CD4-positive, alpha-beta T cell (primary cell): ENCODE measurements at regions of chr14 and their contacts with region 1.

Region 1: DNA sequence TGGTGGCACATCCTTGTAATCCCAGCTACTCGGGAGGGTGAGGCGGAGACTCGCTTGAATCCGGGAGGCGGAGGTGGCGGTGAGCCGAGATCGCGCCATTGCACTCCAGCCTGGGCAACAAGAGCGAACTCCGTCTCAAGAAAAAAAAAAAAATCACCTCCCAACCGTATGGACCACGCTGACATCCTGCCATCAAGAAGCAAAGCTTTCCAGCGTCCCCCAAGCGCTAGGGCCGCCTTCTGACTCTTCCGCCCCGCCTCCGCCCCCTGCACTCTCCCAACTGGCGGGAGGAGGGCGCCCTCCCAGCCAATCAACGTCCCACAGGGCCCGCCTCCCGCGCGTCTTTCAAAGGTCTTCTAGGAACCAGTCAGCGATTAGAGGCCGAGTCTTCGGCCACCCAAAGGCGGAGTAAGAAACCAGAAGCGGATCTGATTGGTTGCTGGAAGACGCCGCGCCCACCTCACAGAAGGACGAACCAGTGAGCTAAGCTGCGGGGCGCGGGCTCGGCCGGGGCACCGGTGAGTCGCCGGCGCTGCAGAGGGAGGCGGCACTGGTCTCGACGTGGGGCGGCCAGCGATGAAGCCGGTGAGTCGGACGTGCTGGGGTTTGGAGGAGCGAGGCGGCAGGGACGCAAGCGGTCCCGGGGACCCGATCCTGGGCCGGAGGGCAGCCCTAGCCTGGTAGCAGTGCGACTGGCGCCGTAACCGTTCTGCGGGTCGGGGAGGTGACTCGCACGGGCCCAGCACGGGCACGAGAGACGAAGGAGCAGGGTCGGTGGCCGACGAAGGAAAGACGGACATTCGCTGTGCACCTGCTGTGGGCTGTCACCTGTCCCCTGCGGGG is at the start of gene CDKN3:
- DNase-seq: peak; percentile 92 to 99 (median 96)
- ATAC-seq: peak; percentile 95
- H3K4me3 ChIP-seq: peak within 1 kb of the TSS; percentile 88
- H3K4me3 Mint-ChIP-seq: peak within 1 kb of the TSS; percentile 87
- H3K27ac ChIP-seq: no peak within 1 kb of the TSS
- H3K27ac Mint-ChIP-seq: peak within 1 kb of the TSS; percentile 47
- H3K4me1 ChIP-seq: peaks cover 20% of the 10 kb centered on the region
- H3K4me1 Mint-ChIP-seq: peaks cover 17% of the 10 kb centered on the region
- H3K27me3 ChIP-seq: no peaks in the 10 kb centered on the region
- H3K27me3 Mint-ChIP-seq: no peaks in the 10 kb centered on the region
- CTCF ChIP-seq: no peak
- total RNA-seq, gene CDKN3: 0.61 to 1.4 TPM

Region 2: DNA sequence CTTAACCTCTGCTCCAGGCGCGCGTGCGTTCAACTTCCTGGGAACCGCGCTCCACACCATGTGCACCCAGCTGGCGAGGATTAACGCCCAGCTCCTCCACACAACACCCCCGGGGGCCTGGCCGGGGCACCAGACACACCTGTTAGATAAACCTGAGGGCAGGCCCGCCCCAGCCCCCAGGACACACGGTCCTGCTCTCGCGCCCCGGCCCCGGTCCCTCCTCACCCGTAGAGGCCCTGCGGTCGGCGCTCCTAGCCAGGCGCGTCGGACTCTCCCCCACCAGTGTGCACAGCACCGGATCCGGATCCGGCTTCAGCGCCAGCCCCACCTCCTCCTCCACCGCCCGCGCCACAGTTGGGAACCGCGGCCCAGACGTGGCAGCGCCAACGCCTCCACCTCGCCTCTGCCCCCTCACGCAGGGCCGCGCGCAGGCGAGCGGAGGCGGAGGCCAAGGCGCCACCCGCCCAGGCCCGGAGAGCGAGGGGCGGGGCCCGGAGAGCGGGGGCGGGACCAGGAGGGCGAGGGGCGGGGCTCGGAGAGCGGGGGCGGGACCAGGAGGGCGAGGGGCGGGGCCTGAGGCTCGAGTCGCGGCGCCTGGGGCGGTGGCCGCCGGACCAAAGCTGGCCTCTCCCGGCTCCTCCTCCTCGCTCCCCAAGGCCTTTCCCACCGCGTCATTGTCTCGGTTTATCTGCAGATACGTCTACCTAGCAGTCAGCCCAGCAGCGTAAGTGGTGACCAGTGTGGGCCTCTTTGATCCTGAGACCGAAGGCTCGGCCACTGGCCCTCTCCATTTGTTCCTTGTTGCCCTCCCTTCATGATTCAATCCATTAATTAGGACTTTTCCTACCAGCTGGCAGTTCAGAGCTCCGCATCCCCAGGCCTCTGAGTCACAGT is 1605.3 kb before region 1 on chr14 and contains the start of gene GNPNAT1:
- CTCF ChIA-PET with region 1: no interaction called
- POLR2A ChIA-PET with region 1: no interaction called
- intact Hi-C with region 1: loop called in 1 of 2 experiments (anchors 2 kb)
- DNase-seq: peak; percentile 79 to 97 (median 87)
- ATAC-seq: peak; percentile 97
- H3K4me3 ChIP-seq: peak within 1 kb of the TSS; percentile 95
- H3K4me3 Mint-ChIP-seq: peak within 1 kb of the TSS; percentile 94
- H3K27ac ChIP-seq: peak within 1 kb of the TSS; percentile 64 to 78
- H3K27ac Mint-ChIP-seq: peak within 1 kb of the TSS; percentile 92
- H3K4me1 ChIP-seq: peaks cover 21% of the 10 kb centered on the region
- H3K4me1 Mint-ChIP-seq: peaks cover 51% of the 10 kb centered on the region
- H3K27me3 ChIP-seq: no peaks in the 10 kb centered on the region
- H3K27me3 Mint-ChIP-seq: no peaks in the 10 kb centered on the region
- CTCF ChIP-seq: no peak
- total RNA-seq, gene GNPNAT1: 3.8 to 4.6 TPM

Region 3: DNA sequence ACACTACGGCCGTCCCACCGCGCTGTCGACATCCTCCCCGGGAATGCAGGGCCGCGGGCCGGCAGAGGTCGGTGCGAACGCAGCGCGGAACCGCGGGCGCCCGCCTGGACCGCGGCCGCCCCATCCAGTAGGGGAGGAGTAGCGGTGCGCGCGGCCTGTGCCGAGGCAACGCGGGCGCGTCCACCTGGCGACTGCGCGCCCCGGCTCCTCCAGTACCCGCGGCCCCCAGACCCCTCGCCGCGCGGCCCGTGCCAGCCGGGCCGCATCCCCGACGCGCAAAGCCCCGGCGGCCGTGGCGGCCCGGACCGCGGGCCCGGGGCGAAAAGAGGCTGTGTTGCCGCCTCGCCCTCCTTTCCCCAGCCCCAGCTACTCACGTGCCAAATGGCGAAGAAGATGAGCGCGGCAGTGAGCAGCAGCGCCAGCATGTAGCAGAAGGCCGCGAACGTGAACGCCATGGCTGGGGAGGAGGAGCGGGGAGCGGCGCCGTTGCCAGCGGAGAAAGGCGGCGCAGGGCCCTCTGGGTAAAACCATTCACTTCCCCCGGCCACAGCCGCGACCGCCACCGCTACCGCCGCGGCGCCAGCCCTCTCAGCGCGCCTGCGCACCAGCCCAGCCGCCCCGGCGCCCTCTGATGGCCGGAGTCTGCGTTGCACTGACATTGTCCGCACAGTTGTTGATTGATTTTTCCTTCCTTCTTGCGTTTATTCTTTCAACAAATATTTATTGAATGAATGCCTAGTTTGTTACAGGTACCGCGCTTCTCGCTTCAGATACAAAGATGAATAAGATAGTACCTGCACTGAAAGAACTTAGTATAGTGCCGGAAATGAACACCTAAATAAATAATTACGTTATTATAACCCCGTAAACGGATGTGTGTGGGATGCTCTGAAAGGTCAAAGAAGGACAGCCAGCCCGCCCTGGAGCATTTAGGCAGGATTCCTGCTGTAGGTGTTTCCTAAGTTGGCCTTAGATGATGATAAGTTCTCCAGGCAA is 44.5 kb after region 1 on chr14 and contains the start of gene CNIH1:
- CTCF ChIA-PET with region 1: interaction called, 4 read pairs
- POLR2A ChIA-PET with region 1: interaction called, 6 read pairs
- intact Hi-C with region 1: loop called (anchors 1 kb)
- DNase-seq: peak; percentile 85 to 97 (median 92)
- ATAC-seq: peak; percentile 93
- H3K4me3 ChIP-seq: peak within 1 kb of the TSS; percentile 66
- H3K4me3 Mint-ChIP-seq: peak within 1 kb of the TSS; percentile 90
- H3K27ac ChIP-seq: peak within 1 kb of the TSS; percentile 41 to 75
- H3K27ac Mint-ChIP-seq: peak within 1 kb of the TSS; percentile 86
- H3K4me1 ChIP-seq: peaks cover 24% of the 10 kb centered on the region
- H3K4me1 Mint-ChIP-seq: peaks cover 44% of the 10 kb centered on the region
- H3K27me3 ChIP-seq: no peaks in the 10 kb centered on the region
- H3K27me3 Mint-ChIP-seq: no peaks in the 10 kb centered on the region
- CTCF ChIP-seq: peak; percentile 98
- total RNA-seq, gene CNIH1: 55.9 TPM

Region 4: GRCh38 chr14:54488646-54489317 is 92.1 kb after region 1 on chr14 and contains the start of gene GMFB:
- CTCF ChIA-PET with region 1: no interaction called
- POLR2A ChIA-PET with region 1: interaction called, 3 read pairs
- intact Hi-C with region 1: loop called in 1 of 2 experiments (anchors 2 kb)
- DNase-seq: peak; percentile 79 to 95 (median 87)
- ATAC-seq: peak; percentile 95
- H3K4me3 ChIP-seq: peak within 1 kb of the TSS; percentile 95
- H3K4me3 Mint-ChIP-seq: peak within 1 kb of the TSS; percentile 99
- H3K27ac ChIP-seq: peak within 1 kb of the TSS; percentile 68 to 84
- H3K27ac Mint-ChIP-seq: peak within 1 kb of the TSS; percentile 86
- H3K4me1 ChIP-seq: peaks cover 32% of the 10 kb centered on the region
- H3K4me1 Mint-ChIP-seq: peaks cover 70% of the 10 kb centered on the region
- H3K27me3 ChIP-seq: no peaks in the 10 kb centered on the region
- H3K27me3 Mint-ChIP-seq: no peaks in the 10 kb centered on the region
- CTCF ChIP-seq: no peak
- total RNA-seq, gene GMFB: 39.5 to 43.5 TPM

Region 5: DNA sequence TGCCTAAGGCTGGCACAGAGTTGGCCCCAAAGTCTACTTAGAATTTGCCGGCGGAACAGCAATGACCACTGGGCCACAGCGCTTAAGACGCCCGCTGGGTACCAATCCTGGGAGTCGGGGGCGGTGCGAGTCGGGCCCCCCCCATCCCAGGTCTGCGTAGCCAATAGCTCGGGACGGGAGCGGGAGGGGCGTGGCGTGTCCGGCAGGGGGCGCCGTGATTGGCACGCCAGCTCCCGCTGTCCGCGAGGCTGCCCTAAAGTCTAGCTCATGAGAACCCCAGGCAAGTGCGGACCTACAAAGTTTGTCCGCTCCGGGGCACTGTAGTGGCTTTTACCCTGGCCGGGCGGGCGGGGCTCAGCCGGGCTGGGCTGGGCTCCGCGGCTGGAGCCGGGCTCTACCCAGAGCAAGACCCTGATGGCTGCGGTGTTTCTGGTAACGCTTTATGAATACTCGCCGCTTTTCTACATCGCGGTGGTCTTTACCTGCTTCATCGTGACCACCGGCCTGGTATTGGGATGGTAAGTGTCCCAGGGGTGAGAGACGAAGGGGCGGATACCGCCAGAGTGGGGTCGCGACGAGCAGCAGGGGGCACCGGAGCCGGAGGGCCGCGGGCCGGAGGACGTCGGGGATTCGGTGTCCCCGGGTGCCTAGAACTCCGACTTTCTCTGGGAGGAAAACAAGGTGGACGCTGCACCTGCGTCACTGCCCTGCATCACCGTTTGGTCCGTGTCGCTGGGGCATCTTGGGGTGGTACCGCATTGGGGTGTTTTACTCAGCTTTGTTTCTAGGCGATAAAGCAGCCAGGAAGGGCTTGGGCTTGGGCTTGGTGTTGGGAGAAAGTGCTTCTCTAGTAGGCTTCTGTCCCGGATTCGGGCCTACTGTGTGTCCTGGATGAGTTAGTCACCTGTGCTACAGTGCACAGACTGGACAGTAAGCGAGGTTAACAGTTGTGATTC is 113.1 kb after region 1 on chr14 and contains the start of gene CGRRF1:
- CTCF ChIA-PET with region 1: interaction called, 4 read pairs
- POLR2A ChIA-PET with region 1: interaction called, 3 read pairs
- intact Hi-C with region 1: loop called (anchors 5 to 10 kb)
- DNase-seq: peak; percentile 87 to 97 (median 94)
- ATAC-seq: peak; percentile 95
- H3K4me3 ChIP-seq: peak within 1 kb of the TSS; percentile 79
- H3K4me3 Mint-ChIP-seq: peak within 1 kb of the TSS; percentile 96
- H3K27ac ChIP-seq: peak within 1 kb of the TSS; percentile 6 to 59
- H3K27ac Mint-ChIP-seq: peak within 1 kb of the TSS; percentile 78
- H3K4me1 ChIP-seq: peaks cover 31% of the 10 kb centered on the region
- H3K4me1 Mint-ChIP-seq: peaks cover 59% of the 10 kb centered on the region
- H3K27me3 ChIP-seq: no peaks in the 10 kb centered on the region
- H3K27me3 Mint-ChIP-seq: peaks cover 4% of the 10 kb centered on the region
- CTCF ChIP-seq: peak; percentile 64
- total RNA-seq, gene CGRRF1: 34.5 to 42.8 TPM

Region 6: DNA sequence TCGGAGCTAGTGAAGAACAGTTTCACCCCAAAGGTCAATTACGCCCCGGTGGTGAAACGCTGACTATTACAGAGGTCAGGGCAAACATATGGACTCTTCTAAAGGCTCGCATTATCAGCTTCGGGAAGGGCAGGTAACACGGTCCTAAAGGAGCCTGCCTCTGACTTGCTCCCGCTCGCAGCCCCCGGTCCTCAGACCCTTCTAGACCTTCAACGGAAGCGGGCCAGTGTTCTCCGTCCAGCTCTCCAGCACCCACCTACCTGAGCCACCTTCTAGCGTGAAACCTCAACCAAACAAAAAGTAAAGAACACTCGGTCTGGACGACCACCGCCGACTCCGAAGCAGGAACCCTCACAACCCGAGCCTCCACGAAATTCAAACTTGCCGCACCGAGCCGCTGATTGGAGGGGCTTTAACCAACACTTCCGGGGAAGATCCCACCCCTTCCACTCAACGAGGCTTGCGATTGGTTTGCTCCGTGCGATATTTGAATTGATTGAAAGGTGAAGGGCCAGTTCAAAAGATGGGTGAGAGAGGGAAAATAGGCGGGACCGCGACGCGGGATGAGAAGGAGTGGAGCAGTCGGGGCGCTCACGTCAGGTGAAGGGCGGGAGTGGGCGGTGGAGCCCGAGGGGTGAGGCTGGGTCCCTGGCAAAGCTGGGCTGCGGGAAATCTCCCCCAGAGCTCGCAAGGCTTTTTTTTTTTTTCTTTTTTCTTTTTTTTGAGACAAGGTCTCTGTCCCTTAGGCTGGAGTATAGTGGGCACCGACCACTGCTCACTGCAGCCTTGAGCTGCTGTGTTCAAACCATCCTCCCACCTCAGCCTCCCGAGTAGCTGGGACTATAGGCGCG is 794.7 kb after region 1 on chr14 and contains the start of gene DLGAP5:
- CTCF ChIA-PET with region 1: no interaction called
- POLR2A ChIA-PET with region 1: no interaction called
- intact Hi-C with region 1: loop called in 1 of 2 experiments (anchors 5 kb)
- DNase-seq: peak; percentile 71 to 96 (median 80)
- ATAC-seq: peak; percentile 98
- H3K4me3 ChIP-seq: peak within 1 kb of the TSS; percentile 74
- H3K4me3 Mint-ChIP-seq: peak within 1 kb of the TSS; percentile 90
- H3K27ac ChIP-seq: peak within 1 kb of the TSS in 1 of 2 donors; percentile 40
- H3K27ac Mint-ChIP-seq: peak within 1 kb of the TSS; percentile 14
- H3K4me1 ChIP-seq: peaks cover 14% of the 10 kb centered on the region
- H3K4me1 Mint-ChIP-seq: peaks cover 21% of the 10 kb centered on the region
- H3K27me3 ChIP-seq: no peaks in the 10 kb centered on the region
- H3K27me3 Mint-ChIP-seq: no peaks in the 10 kb centered on the region
- CTCF ChIP-seq: no peak
- total RNA-seq, gene DLGAP5: 0.25 TPM in 1 of 2 experiments, not detected in the other

Region 7: GRCh38 chr14:55270832-55271565 is 874.3 kb after region 1 on chr14 and contains the start of gene FBXO34:
- CTCF ChIA-PET with region 1: no interaction called
- POLR2A ChIA-PET with region 1: no interaction called
- intact Hi-C with region 1: loop called in 1 of 2 experiments (anchors 5 kb)
- DNase-seq: peak; percentile 96 to 100 (median 100)
- ATAC-seq: peak; percentile 91
- H3K4me3 ChIP-seq: peak within 1 kb of the TSS; percentile 98
- H3K4me3 Mint-ChIP-seq: peak within 1 kb of the TSS; percentile 97
- H3K27ac ChIP-seq: peak within 1 kb of the TSS; percentile 55 to 61
- H3K27ac Mint-ChIP-seq: peak within 1 kb of the TSS; percentile 94
- H3K4me1 ChIP-seq: peaks cover 9% of the 10 kb centered on the region
- H3K4me1 Mint-ChIP-seq: peaks cover 47% of the 10 kb centered on the region
- H3K27me3 ChIP-seq: no peaks in the 10 kb centered on the region
- H3K27me3 Mint-ChIP-seq: no peaks in the 10 kb centered on the region
- CTCF ChIP-seq: peak; percentile 97
- total RNA-seq, gene FBXO34: 28.3 to 29.7 TPM